Activated CD8-positive, alpha-beta memory T cell treated with anti-CD3 and anti-CD28 coated beads, Interleukin-2, amount 10 ng/mL, durations not matched to agents 7 days and 5 days (primary cell): ENCODE measurements at regions of chr11 and their contacts with region 1.

Region 1: GRCh38 chr11:116787786-116788486 is at the start of gene ZPR1:
- DNase-seq: peak; percentile 91
- ATAC-seq: peak; percentile 89
- H3K4me3 Mint-ChIP-seq: peak within 1 kb of the TSS; percentile 82
- H3K27ac Mint-ChIP-seq: peak within 1 kb of the TSS; percentile 88
- H3K4me1 Mint-ChIP-seq: peaks cover 54% of the 10 kb centered on the region
- H3K27me3 Mint-ChIP-seq: peaks cover 2% of the 10 kb centered on the region
- total RNA-seq, gene ZPR1: 66.6 to 72.1 TPM

Region 2: DNA sequence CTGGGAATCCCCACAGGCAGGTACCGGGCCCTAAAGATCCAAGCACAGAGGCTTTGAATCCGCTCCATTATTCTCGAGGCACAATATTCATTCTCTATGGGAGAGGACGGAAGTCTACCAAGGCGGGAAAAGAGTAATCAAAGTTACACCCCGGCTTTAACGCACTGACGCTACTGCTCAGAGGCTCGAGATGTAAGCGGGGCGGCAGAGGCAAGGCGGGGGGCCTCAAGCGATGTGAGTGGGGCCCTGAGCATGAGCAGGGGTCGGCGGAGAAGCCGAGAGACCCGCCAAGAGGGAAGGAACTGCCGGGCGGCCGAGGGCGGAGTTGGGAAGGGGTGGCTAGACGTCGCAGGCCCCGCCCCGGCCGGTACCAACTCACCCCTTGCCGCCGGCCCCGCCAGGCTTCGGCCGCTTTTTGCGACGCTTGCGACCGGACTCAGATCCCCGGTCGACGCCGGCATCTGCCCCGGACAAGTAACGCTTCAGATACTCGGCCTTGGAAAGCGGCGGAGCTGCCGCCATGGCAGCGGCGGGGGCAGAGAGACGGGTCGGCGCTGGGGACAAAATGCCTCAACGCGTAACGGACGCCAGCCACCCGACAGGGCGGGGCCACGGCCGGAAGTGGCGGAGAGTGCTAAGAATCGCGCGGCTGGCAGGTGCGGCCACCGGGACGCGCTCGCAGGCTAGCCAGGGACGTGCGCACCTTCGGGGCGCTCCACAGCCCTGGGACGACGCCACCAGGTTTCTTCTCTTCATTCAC is 15.3 kb before region 1 on chr11 and contains the start of gene BUD13:
- CTCF ChIA-PET with region 1: interaction called, 59 read pairs
- DNase-seq: peak; percentile 95
- ATAC-seq: peak; percentile 92
- H3K4me3 Mint-ChIP-seq: peak within 1 kb of the TSS; percentile 90
- H3K27ac Mint-ChIP-seq: peak within 1 kb of the TSS; percentile 93
- H3K4me1 Mint-ChIP-seq: peaks cover 56% of the 10 kb centered on the region
- H3K27me3 Mint-ChIP-seq: no peaks in the 10 kb centered on the region
- total RNA-seq, gene BUD13: 35.2 to 40.2 TPM

Region 3: GRCh38 chr11:116813781-116814471 is 26.0 kb after region 1 on chr11:
- CTCF ChIA-PET with region 1: interaction called, 10 read pairs
- DNase-seq: peak; percentile 36
- ATAC-seq: no peak
- H3K4me3 Mint-ChIP-seq: no peak overlapping the region
- H3K27ac Mint-ChIP-seq: no peak overlapping the region
- H3K4me1 Mint-ChIP-seq: no peaks in the 10 kb centered on the region
- H3K27me3 Mint-ChIP-seq: no peaks in the 10 kb centered on the region

Region 4: GRCh38 chr11:116835791-116836631 is 48.1 kb after region 1 on chr11:
- CTCF ChIA-PET with region 1: interaction called, 187 read pairs
- DNase-seq: peak; percentile 92
- ATAC-seq: peak; percentile 96
- H3K4me3 Mint-ChIP-seq: peak overlapping the region; percentile 71
- H3K27ac Mint-ChIP-seq: peak overlapping the region; percentile 61
- H3K4me1 Mint-ChIP-seq: peaks cover 12% of the 10 kb centered on the region
- H3K27me3 Mint-ChIP-seq: no peaks in the 10 kb centered on the region

Region 5: DNA sequence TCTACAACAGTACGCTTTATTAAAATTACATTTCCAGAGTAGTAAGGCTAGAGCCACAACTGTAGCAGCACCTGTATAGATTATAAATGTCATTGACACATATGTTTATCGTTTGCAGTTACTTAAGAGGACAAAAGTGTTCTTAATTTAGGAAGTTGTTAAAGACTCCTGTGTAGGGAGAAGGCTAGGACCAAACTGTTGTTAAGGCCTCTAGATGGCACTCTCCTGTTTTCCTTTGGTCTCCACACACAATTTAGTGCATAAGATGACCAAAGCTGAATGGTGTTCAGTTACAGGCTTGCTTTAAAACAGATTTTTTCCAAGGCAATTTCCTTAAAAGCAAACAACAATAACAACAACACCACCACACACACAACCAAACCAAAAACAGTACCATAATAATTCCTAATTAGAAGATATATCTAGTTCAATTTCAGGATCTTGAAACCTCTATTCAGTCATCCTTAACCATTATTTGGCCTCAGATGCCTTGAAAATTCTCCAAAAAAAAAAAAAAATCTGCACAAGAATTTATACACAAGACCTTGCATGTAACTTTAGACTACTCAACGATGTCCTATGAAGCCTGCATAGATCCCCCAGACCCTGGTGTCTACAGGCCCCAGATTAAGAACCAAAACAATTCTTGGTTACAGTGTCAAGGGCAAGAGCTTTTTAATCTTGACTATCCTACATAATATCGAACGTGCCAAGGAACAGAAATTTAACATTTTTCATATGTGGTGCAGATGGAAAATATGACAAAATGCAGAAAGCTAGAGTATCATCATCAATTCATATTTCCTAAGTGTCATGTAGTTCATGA is 92.1 kb after region 1 on chr11:
- CTCF ChIA-PET with region 1: interaction called, 18 read pairs
- DNase-seq: no peak
- ATAC-seq: peak; percentile 86
- H3K4me3 Mint-ChIP-seq: no peak overlapping the region
- H3K27ac Mint-ChIP-seq: no peak overlapping the region
- H3K4me1 Mint-ChIP-seq: peaks cover 9% of the 10 kb centered on the region
- H3K27me3 Mint-ChIP-seq: no peaks in the 10 kb centered on the region

Region 6: GRCh38 chr11:117064275-117064674 is 276.3 kb after region 1 on chr11:
- CTCF ChIA-PET with region 1: no interaction called
- DNase-seq: no peak
- ATAC-seq: no peak
- H3K4me3 Mint-ChIP-seq: no peak overlapping the region
- H3K27ac Mint-ChIP-seq: peak overlapping the region; percentile 35
- H3K4me1 Mint-ChIP-seq: peaks cover 50% of the 10 kb centered on the region
- H3K27me3 Mint-ChIP-seq: no peaks in the 10 kb centered on the region

Region 7: GRCh38 chr11:117107701-117108590 is 320.0 kb after region 1 on chr11:
- CTCF ChIA-PET with region 1: interaction called, 99 read pairs
- DNase-seq: no peak
- ATAC-seq: no peak
- H3K4me3 Mint-ChIP-seq: no peak overlapping the region
- H3K27ac Mint-ChIP-seq: no peak overlapping the region
- H3K4me1 Mint-ChIP-seq: peaks cover 6% of the 10 kb centered on the region
- H3K27me3 Mint-ChIP-seq: peaks cover 3% of the 10 kb centered on the region

Region 8: GRCh38 chr11:117226388-117227385 is 438.8 kb after region 1 on chr11:
- CTCF ChIA-PET with region 1: interaction called, 10 read pairs
- DNase-seq: peak; percentile 56
- ATAC-seq: peak; percentile 54
- H3K4me3 Mint-ChIP-seq: no peak overlapping the region
- H3K27ac Mint-ChIP-seq: peak overlapping the region; percentile 7
- H3K4me1 Mint-ChIP-seq: peaks cover 31% of the 10 kb centered on the region
- H3K27me3 Mint-ChIP-seq: no peaks in the 10 kb centered on the region